ENCODE measurements at regions of chr3 and their contacts with region 1.

Region 1: GRCh38 chr3:184314363-184314699 is at the start of gene EIF4G1:
- DNase-seq: peak; percentile 96 to 98 (median 98)
- ATAC-seq: peak; percentile 84 to 94
- H3K4me3 ChIP-seq: peak within 1 kb of the TSS; percentile 98
- H3K27ac ChIP-seq: peak within 1 kb of the TSS; percentile 97
- H3K4me1 ChIP-seq: peaks cover 12% of the 10 kb centered on the region
- H3K27me3 ChIP-seq: no peaks in the 10 kb centered on the region
- total RNA-seq, gene EIF4G1: 215 to 301 (median 245) TPM

Region 2: DNA sequence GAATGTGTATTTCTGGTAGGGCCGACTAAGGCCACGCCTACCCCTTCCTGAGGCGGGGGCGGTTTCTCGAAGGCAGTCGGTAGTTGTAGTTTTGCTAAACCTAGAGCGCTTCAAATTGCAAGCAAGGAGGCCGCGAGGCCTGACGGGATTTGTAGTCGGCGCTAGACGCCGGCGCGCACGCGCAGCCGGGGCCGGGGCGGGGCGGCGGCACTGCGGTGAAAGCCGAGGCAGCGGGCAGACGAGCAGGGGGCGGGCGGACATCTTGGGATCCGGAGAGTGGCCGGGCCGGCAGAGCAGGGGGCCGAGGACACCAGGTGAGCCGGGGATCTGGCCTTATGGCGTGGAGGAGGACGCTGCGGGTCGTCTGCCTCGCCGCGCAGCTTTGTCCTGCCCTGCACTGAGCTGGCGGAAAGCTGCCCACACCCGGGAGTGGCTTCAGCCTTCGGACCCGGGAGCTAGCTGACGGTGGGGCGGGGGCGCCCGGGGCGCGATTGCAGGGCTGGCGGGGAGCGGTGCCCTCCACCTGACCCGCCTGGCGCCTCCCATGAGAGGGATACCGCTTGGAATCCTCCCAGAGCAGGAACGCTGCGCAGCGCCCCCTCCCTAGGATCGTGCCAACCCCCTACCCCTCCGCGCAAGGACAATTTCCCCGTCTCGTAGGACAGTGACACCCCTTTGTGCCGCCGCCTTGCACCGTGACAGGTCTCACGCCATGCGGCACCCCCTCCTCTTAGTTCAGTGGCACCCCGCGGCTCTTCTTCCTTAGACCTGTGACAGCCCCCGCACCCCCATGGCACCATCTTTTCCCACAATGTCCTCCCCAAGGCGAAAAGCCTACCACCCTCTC is 139.5 kb before region 1 on chr3 and contains the start of gene AP2M1:
- intact Hi-C with region 1: no loop called
- DNase-seq: peak; percentile 99
- ATAC-seq: peak; percentile 92 to 95
- H3K4me3 ChIP-seq: peak within 1 kb of the TSS; percentile 73
- H3K27ac ChIP-seq: peak within 1 kb of the TSS; percentile 93
- H3K4me1 ChIP-seq: peaks cover 9% of the 10 kb centered on the region
- H3K27me3 ChIP-seq: no peaks in the 10 kb centered on the region
- total RNA-seq, gene AP2M1: 271 to 340 (median 329) TPM

Region 3: GRCh38 chr3:184362668-184363540 is 48.6 kb after region 1 on chr3:
- intact Hi-C with region 1: loop called in 1 of 4 experiments (anchors 2 kb)
- DNase-seq: peak; percentile 96 to 98 (median 97)
- ATAC-seq: peak; percentile 83 to 87
- H3K4me3 ChIP-seq: peak overlapping the region; percentile 81
- H3K27ac ChIP-seq: peak overlapping the region; percentile 95
- H3K4me1 ChIP-seq: peaks cover 10% of the 10 kb centered on the region
- H3K27me3 ChIP-seq: no peaks in the 10 kb centered on the region

Region 4: DNA sequence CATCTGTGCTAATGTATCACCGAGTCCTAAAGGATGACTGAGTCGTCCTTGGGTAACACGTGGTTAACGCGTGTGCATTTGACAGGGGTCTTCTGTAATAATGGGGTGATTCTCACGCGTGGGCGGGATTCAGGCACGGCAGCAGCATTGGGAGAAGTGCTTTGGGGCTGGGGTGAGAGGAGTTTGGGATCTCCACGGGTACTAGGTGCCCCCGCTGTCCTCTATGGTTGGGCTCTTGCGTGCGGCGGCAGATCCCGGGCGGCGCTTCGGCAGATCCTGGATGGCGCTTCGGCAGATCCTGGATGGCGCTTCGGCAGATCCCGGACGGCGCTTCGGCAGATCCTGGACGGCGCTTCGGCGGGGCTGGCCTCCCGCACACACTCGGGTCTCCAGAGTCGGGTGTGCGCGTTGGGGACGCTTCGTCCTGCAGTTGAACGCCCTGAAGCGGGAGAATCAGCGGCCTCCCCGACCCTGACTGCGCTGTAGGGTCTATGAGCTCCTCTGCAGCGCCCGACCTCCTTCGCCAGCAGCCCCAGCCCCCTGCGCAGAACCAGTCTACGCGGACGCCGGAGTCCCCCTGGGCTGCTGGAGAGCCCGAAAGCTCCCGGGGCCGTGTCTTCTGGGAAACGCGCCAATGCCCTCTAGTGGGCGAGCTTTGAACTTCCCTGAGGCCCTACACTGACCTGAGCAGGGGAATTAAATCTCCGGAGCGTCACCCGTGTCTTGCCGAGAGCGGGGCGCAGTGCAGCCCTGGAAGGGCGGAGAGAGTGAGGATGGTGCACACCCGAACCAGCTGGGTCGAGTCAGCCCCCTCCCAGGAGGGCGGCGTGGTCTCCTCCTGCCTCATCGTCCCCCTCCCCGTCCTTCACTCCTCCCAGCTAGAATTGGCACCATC is 199.2 kb after region 1 on chr3:
- intact Hi-C with region 1: no loop called
- DNase-seq: peak; percentile 85 to 93 (median 93)
- ATAC-seq: peak; percentile 97 to 99
- H3K4me3 ChIP-seq: peak overlapping the region; percentile 52
- H3K27ac ChIP-seq: no peak overlapping the region
- H3K4me1 ChIP-seq: no peaks in the 10 kb centered on the region
- H3K27me3 ChIP-seq: peaks cover under 1% of the 10 kb centered on the region

Measured in right cardiac atrium (tissue), 5 donors.